ENCODE measurements at regions of chr10 and their contacts with region 1.

Region 1: DNA sequence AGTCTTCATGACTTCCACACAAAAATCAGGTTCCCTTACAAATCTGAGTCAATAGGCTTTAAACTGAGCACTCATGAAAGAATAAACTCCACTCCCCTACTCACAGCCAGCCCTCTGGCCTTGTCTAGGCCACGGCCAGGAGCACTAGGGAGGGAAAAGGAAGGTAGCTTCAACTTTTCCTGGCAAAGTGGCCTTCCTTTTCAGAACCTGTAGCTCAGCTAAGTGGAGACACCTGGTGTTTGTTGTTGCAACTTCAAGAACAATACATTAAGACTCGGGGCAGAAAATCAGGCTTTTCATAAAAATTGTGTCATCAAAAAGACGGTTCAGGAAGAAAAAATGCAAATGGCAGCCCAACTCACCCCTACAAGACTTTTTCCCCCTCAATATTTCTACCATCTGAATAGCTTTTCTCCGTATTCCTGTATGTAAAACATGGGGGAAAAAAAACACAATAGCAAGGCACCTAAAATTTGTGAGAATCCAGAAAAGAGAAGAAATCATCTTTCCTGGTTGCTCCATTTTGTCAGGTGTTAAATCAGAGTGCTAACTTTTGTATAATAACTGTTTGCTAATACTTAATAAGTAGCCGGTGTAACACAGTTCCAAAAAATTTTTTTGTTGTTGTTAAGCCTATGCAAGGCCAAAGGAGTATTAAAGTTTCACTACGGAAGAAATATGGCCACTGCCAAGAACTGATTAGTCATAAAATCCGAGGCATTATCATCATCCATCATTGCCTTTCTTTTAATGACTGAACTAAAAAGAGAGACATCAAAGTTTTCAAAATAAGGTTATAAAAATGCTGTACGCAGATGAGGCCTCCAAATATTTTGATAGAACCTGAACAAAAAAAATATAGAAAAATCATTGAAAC is 66.2 kb upstream of the ARID5B start:
- H3K4me3 ChIP-seq: no peak overlapping the region
- H3K27ac ChIP-seq: peak overlapping the region; percentile 26
- H3K4me1 ChIP-seq: peaks cover 19% of the 10 kb centered on the region
- CTCF ChIP-seq: peak; percentile 46; the same call in 1 of the 2 replicates

Region 2: DNA sequence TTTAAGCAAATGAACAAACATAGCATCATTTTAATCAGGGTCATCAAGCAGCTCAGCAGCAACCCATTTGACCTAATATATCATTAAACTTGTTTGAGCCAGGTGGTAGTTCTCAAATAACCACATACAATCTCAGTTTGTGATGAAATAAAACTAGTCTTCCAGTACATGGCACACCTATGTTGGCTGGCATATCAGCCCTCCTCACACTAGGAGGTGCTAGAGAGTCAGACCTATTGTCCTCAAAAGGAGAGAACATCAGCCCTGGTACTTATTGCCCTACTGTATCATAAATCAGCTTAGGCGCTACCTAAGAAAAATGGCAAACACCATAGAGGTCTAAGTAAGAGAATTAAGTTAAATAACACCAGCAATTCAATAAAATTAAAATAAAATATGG is 90.8 kb before region 1 on chr10:
- CTCF ChIA-PET with region 1: interaction called, 11 read pairs
- POLR2A ChIA-PET with region 1: no interaction called
- H3K4me3 ChIP-seq: no peak overlapping the region
- H3K27ac ChIP-seq: no peak overlapping the region
- H3K4me1 ChIP-seq: peaks cover 4% of the 10 kb centered on the region; the same call in 1 of the 2 replicates
- CTCF ChIP-seq: no peak

Region 3: GRCh38 chr10:61750929-61751471 is 84.3 kb before region 1 on chr10:
- CTCF ChIA-PET with region 1: interaction called, 12 read pairs
- POLR2A ChIA-PET with region 1: no interaction called
- H3K4me3 ChIP-seq: no peak overlapping the region
- H3K27ac ChIP-seq: no peak overlapping the region; the same call in 1 of the 2 replicates
- H3K4me1 ChIP-seq: peaks cover 22% of the 10 kb centered on the region
- CTCF ChIP-seq: peak; percentile 68; the same call in 1 of the 2 replicates